ENCODE measurements at regions of chr2 and their contacts with region 1.

Region 1: GRCh38 chr2:7262727-7263126 is 345.5 kb downstream of the RNF144A start:
- DNase-seq: no peak
- ATAC-seq: no peak
- H3K4me3 ChIP-seq: no peak overlapping the region
- H3K4me3 Mint-ChIP-seq: no peak overlapping the region
- H3K27ac ChIP-seq: no peak overlapping the region
- H3K27ac Mint-ChIP-seq: no peak overlapping the region
- H3K4me1 ChIP-seq: no peaks in the 10 kb centered on the region
- H3K4me1 Mint-ChIP-seq: peaks cover 0 to 11% (median 0%) of the 10 kb centered on the region in 3 donors
- H3K27me3 ChIP-seq: peaks cover 0 to 9% of the 10 kb centered on the region in 2 experiments
- H3K27me3 Mint-ChIP-seq: peaks cover 6 to 13% of the 10 kb centered on the region in 2 donors

Region 2: DNA sequence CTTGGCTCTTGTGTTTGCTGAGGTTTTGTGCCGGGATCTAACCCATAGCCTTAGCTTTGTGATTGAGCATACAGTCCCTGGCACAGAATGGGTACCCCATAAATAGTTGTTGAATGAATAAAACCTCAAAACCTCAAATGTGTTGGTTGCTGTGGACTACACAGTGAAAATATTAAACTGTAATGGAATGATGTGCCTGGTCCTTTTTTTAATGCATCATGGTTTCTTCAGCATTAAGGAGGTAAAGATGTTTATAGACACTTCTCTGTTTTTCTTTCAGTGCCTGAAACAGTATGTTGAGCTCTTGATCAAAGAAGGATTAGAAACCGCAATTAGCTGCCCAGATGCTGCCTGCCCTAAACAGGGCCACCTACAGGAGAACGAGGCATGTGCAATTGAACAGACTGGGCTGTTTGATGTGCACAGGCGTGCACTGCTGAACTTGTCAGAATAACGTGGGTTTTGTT is 248.5 kb before region 1 on chr2:
- CTCF ChIA-PET with region 1: no interaction called
- POLR2A ChIA-PET with region 1: no interaction called
- DNase-seq: peak in 28 of 35 experiments; percentile 15 to 58 (median 31)
- ATAC-seq: peak; percentile 63 to 73 (median 68)
- H3K4me3 ChIP-seq: no peak overlapping the region
- H3K4me3 Mint-ChIP-seq: no peak overlapping the region
- H3K27ac ChIP-seq: no peak overlapping the region
- H3K27ac Mint-ChIP-seq: peak overlapping the region; percentile 25 to 35
- H3K4me1 ChIP-seq: peaks cover 0 to 8% of the 10 kb centered on the region in 2 experiments
- H3K4me1 Mint-ChIP-seq: peaks cover 37 to 43% (median 41%) of the 10 kb centered on the region in 3 donors
- H3K27me3 ChIP-seq: no peaks in the 10 kb centered on the region
- H3K27me3 Mint-ChIP-seq: no peaks in the 10 kb centered on the region

Region 3: DNA sequence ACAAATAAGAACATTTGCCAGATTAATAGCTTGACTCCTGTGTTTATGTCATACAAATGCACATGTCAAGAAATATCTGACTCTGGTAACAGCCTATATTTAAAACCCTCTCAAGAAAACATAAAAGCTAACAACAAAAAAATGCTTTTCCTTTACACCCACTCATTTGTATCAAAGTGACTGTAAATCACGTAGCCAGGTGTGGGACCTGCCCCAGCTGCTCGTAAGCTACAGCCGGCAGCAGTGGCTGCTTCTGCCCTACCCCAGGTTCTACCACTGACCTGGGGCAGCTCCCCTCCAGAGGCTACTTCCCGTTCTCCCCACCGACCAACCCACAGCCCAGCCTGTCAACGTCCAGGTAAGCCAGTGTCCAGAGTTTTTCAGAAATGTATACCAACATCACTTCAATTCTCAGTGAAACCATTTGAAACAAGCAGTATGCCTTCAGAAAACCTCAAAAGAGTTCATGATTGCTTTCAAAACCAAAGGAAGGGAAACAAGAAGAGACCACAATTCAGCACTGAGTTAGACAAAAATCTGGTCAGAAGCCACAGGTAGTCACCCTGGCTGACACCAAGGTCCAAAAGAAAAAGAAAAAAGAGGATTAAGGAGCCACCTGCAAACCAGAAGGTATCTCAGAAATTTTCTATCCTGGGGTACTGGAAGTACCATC is 1534.3 kb after region 1 on chr2:
- CTCF ChIA-PET with region 1: interaction called in 1 of 2 experiments, 10 read pairs
- POLR2A ChIA-PET with region 1: no interaction called
- DNase-seq: no peak
- ATAC-seq: no peak
- H3K4me3 ChIP-seq: no peak overlapping the region
- H3K4me3 Mint-ChIP-seq: no peak overlapping the region
- H3K27ac ChIP-seq: no peak overlapping the region
- H3K27ac Mint-ChIP-seq: peak overlapping the region in 1 of 2 donors; percentile 45
- H3K4me1 ChIP-seq: peaks cover 0 to 6% of the 10 kb centered on the region in 2 experiments
- H3K4me1 Mint-ChIP-seq: peaks cover 3 to 29% (median 7%) of the 10 kb centered on the region in 3 donors
- H3K27me3 ChIP-seq: no peaks in the 10 kb centered on the region
- H3K27me3 Mint-ChIP-seq: no peaks in the 10 kb centered on the region

Measured in T-cell (primary cell).